GM12878 (cell line): ENCODE measurements at regions of chr4 and their contacts with region 1.

Region 1: GRCh38 chr4:20422398-20422797 is 170.7 kb downstream of the SLIT2 start:
- DNase-seq: no peak
- ATAC-seq: peak; percentile 79
- H3K4me3 ChIP-seq: no peak overlapping the region
- H3K27ac ChIP-seq: no peak overlapping the region
- H3K4me1 ChIP-seq: no peaks in the 10 kb centered on the region
- H3K27me3 ChIP-seq: no peaks in the 10 kb centered on the region
- CTCF ChIP-seq: peak; percentile 35 to 61 (median 37)
- EP300 ChIP-seq: no peak
- POLR2A ChIP-seq: no peak
- RAD21 ChIP-seq: peak; percentile 49

Region 2: DNA sequence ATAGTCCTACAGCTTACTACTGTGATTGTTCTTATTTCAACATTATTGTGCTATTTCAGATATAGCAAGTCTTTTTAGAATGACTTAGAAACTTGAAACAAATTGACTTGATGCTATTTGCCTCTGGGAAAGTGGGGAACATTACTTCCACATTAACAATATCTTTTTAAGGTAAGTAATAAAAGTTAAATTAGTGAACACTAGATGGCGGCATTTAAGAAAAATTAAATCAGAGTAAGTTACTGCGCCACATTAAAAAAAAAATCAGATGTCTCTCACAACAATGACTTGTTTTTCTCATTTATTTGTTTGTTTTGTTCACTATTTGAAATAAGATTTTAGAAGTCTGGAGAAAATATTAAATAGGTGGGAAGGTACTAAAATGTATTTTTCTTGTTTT is 1197.6 kb before region 1 on chr4:
- CTCF ChIA-PET with region 1: no interaction called
- POLR2A ChIA-PET with region 1: no interaction called
- RAD21 ChIA-PET with region 1: no interaction called
- SMC1A ChIA-PET with region 1: no interaction called
- in situ Hi-C with region 1: no loop called
- intact Hi-C with region 1: loop called (anchors 10 kb)
- DNase-seq: no peak
- ATAC-seq: no peak
- H3K4me3 ChIP-seq: no peak overlapping the region
- H3K27ac ChIP-seq: no peak overlapping the region
- H3K4me1 ChIP-seq: no peaks in the 10 kb centered on the region
- H3K27me3 ChIP-seq: no peaks in the 10 kb centered on the region
- CTCF ChIP-seq: peak in 1 of 3 experiments; percentile 14; a peak in 2 of 6 replicates
- EP300 ChIP-seq: no peak
- POLR2A ChIP-seq: no peak
- RAD21 ChIP-seq: 0 out of 2 replicates have a peak, but pooled peaks have one; percentile 20

Region 3: GRCh38 chr4:19961091-19961490 is 461.3 kb before region 1 on chr4:
- CTCF ChIA-PET with region 1: no interaction called
- POLR2A ChIA-PET with region 1: no interaction called
- RAD21 ChIA-PET with region 1: no interaction called
- SMC1A ChIA-PET with region 1: no interaction called
- in situ Hi-C with region 1: no loop called
- intact Hi-C with region 1: no loop called
- DNase-seq: no peak
- ATAC-seq: no peak
- H3K4me3 ChIP-seq: no peak overlapping the region
- H3K27ac ChIP-seq: no peak overlapping the region
- H3K4me1 ChIP-seq: no peaks in the 10 kb centered on the region
- H3K27me3 ChIP-seq: no peaks in the 10 kb centered on the region
- CTCF ChIP-seq: no peak
- EP300 ChIP-seq: no peak
- POLR2A ChIP-seq: no peak
- RAD21 ChIP-seq: no peak

Region 4: GRCh38 chr4:20395160-20395773 is 27.1 kb before region 1 on chr4:
- CTCF ChIA-PET with region 1: interaction called, 30 read pairs
- POLR2A ChIA-PET with region 1: no interaction called
- RAD21 ChIA-PET with region 1: no interaction called
- SMC1A ChIA-PET with region 1: interaction called, 5 read pairs
- in situ Hi-C with region 1: no loop called
- intact Hi-C with region 1: no loop called
- DNase-seq: no peak
- ATAC-seq: peak; percentile 61; the same call in 2 of the 3 replicates
- H3K4me3 ChIP-seq: no peak overlapping the region
- H3K27ac ChIP-seq: no peak overlapping the region
- H3K4me1 ChIP-seq: no peaks in the 10 kb centered on the region
- H3K27me3 ChIP-seq: no peaks in the 10 kb centered on the region
- CTCF ChIP-seq: peak; percentile 57 to 66 (median 63)
- EP300 ChIP-seq: no peak
- POLR2A ChIP-seq: no peak
- RAD21 ChIP-seq: peak; percentile 51

Region 5: DNA sequence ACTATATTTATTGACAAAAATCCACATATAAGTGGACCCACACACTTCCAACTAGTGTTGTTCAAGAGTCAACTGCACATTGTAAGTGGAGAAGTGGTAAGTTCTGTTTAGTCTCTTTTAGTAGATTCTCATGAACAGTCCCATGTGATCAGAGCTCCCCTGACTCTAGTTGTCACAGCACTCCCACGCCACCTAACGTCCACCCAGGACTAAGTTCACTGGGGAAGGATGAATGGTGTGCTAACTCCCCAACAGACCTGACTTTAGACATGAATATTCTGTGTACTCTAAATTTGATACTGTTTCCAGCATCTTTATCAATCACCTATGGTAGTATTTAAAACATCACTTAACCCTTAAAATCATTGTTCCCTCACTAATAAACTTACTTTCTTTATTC is 337.7 kb after region 1 on chr4:
- CTCF ChIA-PET with region 1: interaction called, 8 read pairs
- POLR2A ChIA-PET with region 1: no interaction called
- RAD21 ChIA-PET with region 1: no interaction called
- SMC1A ChIA-PET with region 1: no interaction called
- in situ Hi-C with region 1: no loop called
- intact Hi-C with region 1: loop called (anchors 2 kb)
- DNase-seq: no peak
- ATAC-seq: peak; percentile 76
- H3K4me3 ChIP-seq: no peak overlapping the region
- H3K27ac ChIP-seq: no peak overlapping the region
- H3K4me1 ChIP-seq: no peaks in the 10 kb centered on the region
- H3K27me3 ChIP-seq: no peaks in the 10 kb centered on the region
- CTCF ChIP-seq: peak in 2 of 3 experiments; percentile 25 to 44; a peak in 2 of 6 replicates
- EP300 ChIP-seq: no peak
- POLR2A ChIP-seq: no peak
- RAD21 ChIP-seq: 0 out of 2 replicates have a peak, but pooled peaks have one; percentile 28